IMR-90 (cell line): ENCODE measurements at regions of chr21 and their contacts with region 1.

Region 1: GRCh38 chr21:34812504-34813265 is 143.9 kb downstream of the CLIC6 start:
- DNase-seq: peak; percentile 99
- ATAC-seq: peak; percentile 74
- H3K4me3 ChIP-seq: no peak overlapping the region
- H3K27ac ChIP-seq: peak overlapping the region; percentile 87
- H3K4me1 ChIP-seq: peaks cover 81% of the 10 kb centered on the region
- H3K27me3 ChIP-seq: no peaks in the 10 kb centered on the region
- CTCF ChIP-seq: no peak
- POLR2A ChIP-seq: no peak
- RAD21 ChIP-seq: no peak; the same call in 1 of the 2 replicates

Region 2: GRCh38 chr21:34669149-34669879 is 143.4 kb before region 1 on chr21:
- CTCF ChIA-PET with region 1: no interaction called
- POLR2A ChIA-PET with region 1: no interaction called
- dilution Hi-C with region 1: no loop called
- in situ Hi-C with region 1: no loop called
- intact Hi-C with region 1: no loop called
- DNase-seq: no peak
- ATAC-seq: peak; percentile 46; the same call in 1 of the 2 replicates
- H3K4me3 ChIP-seq: peak overlapping the region; percentile 20
- H3K27ac ChIP-seq: no peak overlapping the region
- H3K4me1 ChIP-seq: peaks cover 8% of the 10 kb centered on the region; the same call in 1 of the 2 replicates
- H3K27me3 ChIP-seq: peaks cover 85% of the 10 kb centered on the region
- CTCF ChIP-seq: no peak
- POLR2A ChIP-seq: no peak
- RAD21 ChIP-seq: no peak

Region 3: GRCh38 chr21:34845521-34846451 is 33.1 kb after region 1 on chr21:
- CTCF ChIA-PET with region 1: no interaction called
- POLR2A ChIA-PET with region 1: interaction called, 3 read pairs
- dilution Hi-C with region 1: no loop called
- in situ Hi-C with region 1: no loop called
- intact Hi-C with region 1: loop called (anchors 5 kb)
- DNase-seq: peak; percentile 90
- ATAC-seq: peak; percentile 11
- H3K4me3 ChIP-seq: no peak overlapping the region
- H3K27ac ChIP-seq: peak overlapping the region; percentile 63
- H3K4me1 ChIP-seq: peaks cover 36% of the 10 kb centered on the region
- H3K27me3 ChIP-seq: no peaks in the 10 kb centered on the region
- CTCF ChIP-seq: no peak
- POLR2A ChIP-seq: no peak; the same call in none of the 2 replicates
- RAD21 ChIP-seq: peak; percentile 24

Region 4: GRCh38 chr21:34881894-34882371 is 69.2 kb after region 1 on chr21:
- CTCF ChIA-PET with region 1: interaction called, 4 read pairs
- POLR2A ChIA-PET with region 1: interaction called, 3 read pairs
- dilution Hi-C with region 1: no loop called
- in situ Hi-C with region 1: no loop called
- intact Hi-C with region 1: loop called (anchors 5 kb)
- DNase-seq: peak; percentile 92
- ATAC-seq: peak; percentile 61
- H3K4me3 ChIP-seq: peak overlapping the region; percentile 32; the same call in 1 of the 2 replicates
- H3K27ac ChIP-seq: peak overlapping the region; percentile 90
- H3K4me1 ChIP-seq: peaks cover 13% of the 10 kb centered on the region
- H3K27me3 ChIP-seq: no peaks in the 10 kb centered on the region
- CTCF ChIP-seq: no peak
- POLR2A ChIP-seq: peak; percentile 59
- RAD21 ChIP-seq: no peak

Region 5: DNA sequence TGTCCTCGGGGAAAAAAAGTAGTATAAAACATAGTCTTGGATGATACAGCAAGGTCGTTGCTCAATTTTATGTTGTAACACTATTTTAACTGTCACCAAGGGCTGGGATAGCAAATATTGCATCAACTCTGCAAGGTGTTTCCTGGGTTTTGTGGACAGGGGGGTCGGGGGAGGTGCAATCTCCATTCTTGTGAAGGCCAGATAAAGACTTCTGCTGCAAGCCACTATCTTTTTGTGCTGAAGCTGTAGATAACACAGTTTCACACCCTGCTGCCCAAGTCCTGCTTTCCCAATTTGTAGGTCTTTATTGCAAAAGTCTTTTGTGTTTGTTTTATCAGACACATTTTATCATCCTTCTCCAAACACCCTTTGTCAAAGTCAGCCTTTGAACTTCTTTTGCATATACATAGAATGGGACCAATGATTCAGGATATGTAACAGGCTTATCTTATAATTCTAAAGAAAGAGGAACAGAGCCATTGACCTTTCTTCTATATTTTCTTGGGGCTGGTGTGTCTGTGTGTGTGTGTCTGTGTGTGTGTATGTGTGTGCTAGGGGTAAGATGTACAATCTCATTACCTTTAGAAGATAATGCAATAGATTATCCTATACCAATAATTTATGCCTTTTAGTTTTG is 95.9 kb after region 1 on chr21:
- CTCF ChIA-PET with region 1: no interaction called
- POLR2A ChIA-PET with region 1: no interaction called
- dilution Hi-C with region 1: no loop called
- in situ Hi-C with region 1: no loop called
- intact Hi-C with region 1: no loop called
- DNase-seq: no peak
- ATAC-seq: no peak
- H3K4me3 ChIP-seq: no peak overlapping the region
- H3K27ac ChIP-seq: no peak overlapping the region
- H3K4me1 ChIP-seq: peaks cover 5% of the 10 kb centered on the region; the same call in 1 of the 2 replicates
- H3K27me3 ChIP-seq: no peaks in the 10 kb centered on the region
- CTCF ChIP-seq: no peak
- POLR2A ChIP-seq: no peak
- RAD21 ChIP-seq: no peak